ENCODE measurements at regions of chr5 and their contacts with region 1.

Region 1: GRCh38 chr5:66209350-66209749 is 65.2 kb downstream of the SREK1 start:
- DNase-seq: peak; percentile 93
- H3K4me3 ChIP-seq: no peak overlapping the region
- H3K27ac ChIP-seq: peak overlapping the region; percentile 56
- H3K4me1 ChIP-seq: peaks cover 30% of the 10 kb centered on the region
- H3K27me3 ChIP-seq: no peaks in the 10 kb centered on the region
- CTCF ChIP-seq: peak; percentile 27 to 49

Region 2: DNA sequence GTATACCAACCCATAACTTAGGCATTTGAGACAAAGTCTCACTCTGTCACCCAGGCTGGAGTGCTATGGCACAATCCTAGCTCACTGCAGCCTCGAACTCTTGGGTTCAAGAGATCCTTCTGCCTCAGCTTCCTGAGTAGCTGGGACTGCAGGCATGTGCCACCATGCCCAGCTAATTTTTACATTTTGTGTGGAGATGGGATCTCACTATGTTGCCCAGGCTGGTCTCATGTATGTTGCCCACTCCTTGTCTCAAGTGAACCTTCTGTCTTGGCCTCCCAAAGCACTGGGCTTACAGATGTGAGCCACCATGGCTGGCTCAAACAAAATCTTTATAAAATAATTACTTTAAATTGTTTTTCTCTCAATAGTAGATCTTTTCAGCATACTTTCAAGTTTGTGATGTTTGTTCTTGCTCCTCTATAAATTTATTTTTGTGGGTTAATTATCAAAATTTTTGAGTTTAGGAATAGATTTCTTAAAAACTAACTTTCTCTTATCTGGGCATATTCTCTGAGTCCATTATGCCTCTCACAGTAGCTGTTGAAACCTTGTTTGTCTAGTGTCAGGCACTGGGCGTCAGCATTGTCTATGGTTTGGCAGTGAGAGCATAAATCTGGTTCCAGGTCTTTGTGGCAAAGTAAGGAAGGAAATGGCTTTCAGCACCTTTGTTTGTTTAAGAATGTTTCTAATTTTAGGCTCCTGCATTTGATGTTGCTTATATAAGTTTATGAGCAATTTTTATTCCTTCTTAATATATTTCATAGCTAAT is 448.7 kb before region 1 on chr5:
- CTCF ChIA-PET with region 1: no interaction called
- dilution Hi-C with region 1: no loop called
- in situ Hi-C with region 1: no loop called
- intact Hi-C with region 1: loop called (anchors 1 kb)
- DNase-seq: peak; percentile 43
- H3K4me3 ChIP-seq: no peak overlapping the region
- H3K27ac ChIP-seq: no peak overlapping the region
- H3K4me1 ChIP-seq: no peaks in the 10 kb centered on the region
- H3K27me3 ChIP-seq: no peaks in the 10 kb centered on the region
- CTCF ChIP-seq: peak; percentile 20 to 51